CD8-positive, alpha-beta T cell (primary cell): ENCODE measurements at regions of chr7 and their contacts with region 1.

Region 1: DNA sequence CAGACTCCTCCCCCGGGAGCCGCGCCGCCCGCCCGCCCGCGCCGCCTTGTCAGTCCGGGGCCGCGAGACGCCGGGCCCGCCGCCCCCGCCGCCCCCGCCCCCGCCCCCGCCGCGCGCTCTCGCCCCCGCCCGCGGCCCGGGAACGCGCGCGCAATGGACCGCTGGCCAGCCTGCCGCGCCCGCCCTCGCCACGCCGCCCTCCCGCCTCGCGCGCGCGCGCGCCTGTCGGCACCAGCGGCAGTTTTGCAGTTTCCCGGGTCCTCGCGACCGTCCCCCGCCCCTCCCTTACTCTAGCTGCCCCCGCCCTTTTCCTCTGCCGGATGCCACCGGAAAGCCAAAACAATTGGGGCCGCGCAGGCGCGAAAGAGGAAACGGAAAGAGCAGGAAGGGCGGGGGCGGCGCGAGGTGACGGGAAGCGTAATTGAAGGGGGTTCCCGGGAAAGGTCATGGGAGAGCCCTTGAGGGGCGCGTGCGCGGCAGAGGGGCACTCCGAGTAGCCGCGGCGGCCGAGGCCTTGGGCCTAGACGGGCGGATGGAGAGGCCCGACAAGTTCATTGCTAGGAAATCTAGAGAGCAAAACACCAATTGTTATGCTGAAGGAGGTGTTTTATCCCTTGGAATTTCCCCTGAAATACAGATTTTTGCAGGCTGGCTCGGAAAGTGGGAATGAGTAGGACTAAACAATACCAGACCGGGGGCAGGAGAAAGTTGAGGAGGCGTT is 400 bp upstream of the KBTBD2 start:
- DNase-seq: peak; percentile 92 to 99 (median 97)
- ATAC-seq: peak; percentile 61
- H3K4me3 ChIP-seq: peak overlapping the region; percentile 72 to 83
- H3K4me3 Mint-ChIP-seq: peak overlapping the region; percentile 92
- H3K27ac ChIP-seq: peak overlapping the region; percentile 95 to 100
- H3K27ac Mint-ChIP-seq: peak overlapping the region; percentile 99
- H3K4me1 ChIP-seq: peaks cover 42% of the 10 kb centered on the region
- H3K4me1 Mint-ChIP-seq: peaks cover 48% of the 10 kb centered on the region
- H3K27me3 ChIP-seq: no peaks in the 10 kb centered on the region
- H3K27me3 Mint-ChIP-seq: no peaks in the 10 kb centered on the region
- CTCF ChIP-seq: no peak

Region 2: GRCh38 chr7:32495298-32496176 is 396.4 kb before region 1 on chr7 and contains the start of gene AVL9:
- CTCF ChIA-PET with region 1: no interaction called
- POLR2A ChIA-PET with region 1: interaction called, 7 read pairs
- intact Hi-C with region 1: loop called (anchors 2 kb)
- DNase-seq: peak; percentile 98 to 99 (median 99)
- ATAC-seq: peak; percentile 89
- H3K4me3 ChIP-seq: peak within 1 kb of the TSS; percentile 66 to 87
- H3K4me3 Mint-ChIP-seq: peak within 1 kb of the TSS; percentile 97
- H3K27ac ChIP-seq: peak within 1 kb of the TSS; percentile 95 to 99
- H3K27ac Mint-ChIP-seq: peak within 1 kb of the TSS; percentile 96
- H3K4me1 ChIP-seq: peaks cover 31% of the 10 kb centered on the region
- H3K4me1 Mint-ChIP-seq: peaks cover 42% of the 10 kb centered on the region
- H3K27me3 ChIP-seq: no peaks in the 10 kb centered on the region
- H3K27me3 Mint-ChIP-seq: no peaks in the 10 kb centered on the region
- CTCF ChIP-seq: no peak
- total RNA-seq, gene AVL9: 22.4 to 24.7 TPM

Region 3: DNA sequence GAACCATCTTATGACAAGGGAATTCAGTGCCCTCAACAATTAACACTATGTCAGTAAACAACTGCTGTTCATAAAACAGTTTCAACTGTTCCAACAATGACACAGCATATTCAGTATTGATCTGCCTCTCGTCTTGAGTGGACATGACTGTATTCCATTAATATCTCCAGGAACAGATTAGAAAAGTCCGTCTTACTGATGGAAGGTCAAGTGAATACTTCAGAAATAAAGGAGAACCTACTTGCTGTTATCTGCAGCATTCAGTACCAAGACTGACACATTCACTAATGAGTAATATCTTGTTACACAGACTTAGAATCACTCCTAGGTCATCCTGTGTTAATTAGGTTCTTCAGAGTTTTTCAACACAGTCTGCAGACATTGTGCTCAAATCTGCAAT is 12.5 kb before region 1 on chr7:
- CTCF ChIA-PET with region 1: interaction called, 6 read pairs
- POLR2A ChIA-PET with region 1: interaction called, 27 read pairs
- intact Hi-C with region 1: no loop called
- DNase-seq: no peak
- ATAC-seq: no peak
- H3K4me3 ChIP-seq: no peak overlapping the region
- H3K4me3 Mint-ChIP-seq: no peak overlapping the region
- H3K27ac ChIP-seq: no peak overlapping the region
- H3K27ac Mint-ChIP-seq: no peak overlapping the region
- H3K4me1 ChIP-seq: peaks cover 42% of the 10 kb centered on the region
- H3K4me1 Mint-ChIP-seq: peaks cover 66% of the 10 kb centered on the region
- H3K27me3 ChIP-seq: no peaks in the 10 kb centered on the region
- H3K27me3 Mint-ChIP-seq: no peaks in the 10 kb centered on the region
- CTCF ChIP-seq: no peak

Region 4: DNA sequence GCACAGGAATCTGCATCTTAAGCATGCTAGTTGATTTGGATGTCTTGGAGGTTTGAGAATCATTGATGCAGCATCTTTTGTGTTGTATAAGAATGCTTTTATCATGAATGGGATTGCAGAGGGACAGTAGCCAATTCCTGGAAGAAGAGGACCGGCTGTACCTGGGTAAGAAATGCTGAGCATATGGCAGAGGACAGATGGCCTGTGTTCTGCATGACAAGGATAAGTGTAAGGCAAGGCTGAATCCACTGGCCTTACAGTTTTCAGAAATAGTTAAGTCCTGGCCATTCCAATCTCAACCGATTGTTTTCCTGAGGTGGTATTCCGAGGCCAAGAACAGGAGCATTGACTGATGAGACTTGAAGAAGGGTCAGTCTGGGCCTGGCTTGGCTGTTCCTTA is 24.0 kb after region 1 on chr7:
- CTCF ChIA-PET with region 1: no interaction called
- POLR2A ChIA-PET with region 1: no interaction called
- intact Hi-C with region 1: no loop called
- DNase-seq: no peak
- ATAC-seq: no peak
- H3K4me3 ChIP-seq: no peak overlapping the region
- H3K4me3 Mint-ChIP-seq: no peak overlapping the region
- H3K27ac ChIP-seq: no peak overlapping the region
- H3K27ac Mint-ChIP-seq: no peak overlapping the region
- H3K4me1 ChIP-seq: no peaks in the 10 kb centered on the region
- H3K4me1 Mint-ChIP-seq: no peaks in the 10 kb centered on the region
- H3K27me3 ChIP-seq: no peaks in the 10 kb centered on the region
- H3K27me3 Mint-ChIP-seq: no peaks in the 10 kb centered on the region
- CTCF ChIP-seq: no peak

Region 5: GRCh38 chr7:32942786-32943653 is 51.1 kb after region 1 on chr7:
- CTCF ChIA-PET with region 1: interaction called, 41 read pairs
- POLR2A ChIA-PET with region 1: interaction called, 13 read pairs
- intact Hi-C with region 1: loop called (anchors 1 to 5 kb)
- DNase-seq: peak; percentile 25 to 81 (median 67)
- ATAC-seq: peak; percentile 86
- H3K4me3 ChIP-seq: peak overlapping the region; percentile 55 to 66
- H3K4me3 Mint-ChIP-seq: peak overlapping the region; percentile 78
- H3K27ac ChIP-seq: peak overlapping the region in 1 of 2 experiments; percentile 30
- H3K27ac Mint-ChIP-seq: no peak overlapping the region
- H3K4me1 ChIP-seq: peaks cover 16% of the 10 kb centered on the region
- H3K4me1 Mint-ChIP-seq: peaks cover 8% of the 10 kb centered on the region
- H3K27me3 ChIP-seq: no peaks in the 10 kb centered on the region
- H3K27me3 Mint-ChIP-seq: peaks cover 10% of the 10 kb centered on the region
- CTCF ChIP-seq: peak; percentile 74

Region 6: DNA sequence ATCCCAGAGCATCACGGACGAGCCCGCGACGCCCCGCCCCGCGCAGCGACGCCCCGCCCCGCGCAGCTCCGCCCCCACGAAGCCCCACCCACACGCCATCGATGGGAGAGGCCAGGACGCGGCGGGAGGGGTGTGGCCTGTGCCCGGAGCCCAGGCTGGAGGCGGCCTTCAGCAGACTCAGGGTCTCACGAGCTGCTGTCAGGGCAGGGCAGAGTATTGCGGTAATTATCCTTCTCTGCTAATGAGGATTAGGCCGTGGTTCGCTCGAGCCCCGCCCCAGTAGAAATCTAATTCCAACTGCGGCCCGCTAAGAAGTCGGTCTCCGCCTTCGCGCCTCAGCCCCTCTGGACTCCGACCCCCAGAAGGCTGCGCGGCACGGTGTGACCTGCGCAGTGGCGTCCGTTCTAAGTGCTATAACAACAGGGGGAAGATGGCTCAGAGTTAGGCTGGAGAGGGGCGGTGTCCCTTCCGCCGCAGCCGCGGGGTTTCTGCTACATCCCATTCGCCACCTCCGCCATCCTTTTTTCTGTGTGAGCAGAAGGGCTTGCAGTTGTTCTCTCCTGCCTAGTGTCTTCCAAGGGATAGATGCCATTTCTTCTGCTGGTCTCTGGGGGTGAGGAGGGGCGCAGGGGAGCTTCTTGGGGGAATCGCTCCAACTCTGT is 171.0 kb after region 1 on chr7:
- CTCF ChIA-PET with region 1: no interaction called
- POLR2A ChIA-PET with region 1: interaction called, 20 read pairs
- intact Hi-C with region 1: loop called (anchors 1 to 2 kb)
- DNase-seq: peak; percentile 88 to 97 (median 91)
- ATAC-seq: peak; percentile 92
- H3K4me3 ChIP-seq: peak overlapping the region; percentile 75 to 97
- H3K4me3 Mint-ChIP-seq: peak overlapping the region; percentile 91
- H3K27ac ChIP-seq: peak overlapping the region; percentile 79 to 82
- H3K27ac Mint-ChIP-seq: peak overlapping the region; percentile 94
- H3K4me1 ChIP-seq: peaks cover 32% of the 10 kb centered on the region
- H3K4me1 Mint-ChIP-seq: peaks cover 42% of the 10 kb centered on the region
- H3K27me3 ChIP-seq: no peaks in the 10 kb centered on the region
- H3K27me3 Mint-ChIP-seq: no peaks in the 10 kb centered on the region
- CTCF ChIP-seq: no peak

Region 7: GRCh38 chr7:33243319-33243881 is 351.4 kb after region 1 on chr7:
- CTCF ChIA-PET with region 1: no interaction called
- POLR2A ChIA-PET with region 1: no interaction called
- intact Hi-C with region 1: no loop called
- DNase-seq: peak in 2 of 9 experiments; percentile 13
- ATAC-seq: no peak
- H3K4me3 ChIP-seq: no peak overlapping the region
- H3K4me3 Mint-ChIP-seq: no peak overlapping the region
- H3K27ac ChIP-seq: no peak overlapping the region
- H3K27ac Mint-ChIP-seq: no peak overlapping the region
- H3K4me1 ChIP-seq: no peaks in the 10 kb centered on the region
- H3K4me1 Mint-ChIP-seq: no peaks in the 10 kb centered on the region
- H3K27me3 ChIP-seq: no peaks in the 10 kb centered on the region
- H3K27me3 Mint-ChIP-seq: no peaks in the 10 kb centered on the region
- CTCF ChIP-seq: peak; percentile 18